PC-9 (cell line): ENCODE measurements at regions of chr1 and their contacts with region 1.

Region 1: GRCh38 chr1:20376880-20377494 is 86.3 kb downstream of the VWA5B1 start:
- DNase-seq: peak in 1 of 2 experiments; percentile 53
- H3K4me3 ChIP-seq: no peak overlapping the region
- H3K27ac ChIP-seq: no peak overlapping the region
- H3K4me1 ChIP-seq: peaks cover 14% of the 10 kb centered on the region
- H3K27me3 ChIP-seq: no peaks in the 10 kb centered on the region
- CTCF ChIP-seq: peak; percentile 76

Region 2: GRCh38 chr1:20411196-20411980 is 34.4 kb after region 1 on chr1:
- CTCF ChIA-PET with region 1: interaction called, 8 read pairs
- POLR2A ChIA-PET with region 1: interaction called, 32 read pairs
- intact Hi-C with region 1: no loop called
- DNase-seq: peak; percentile 33 to 57
- H3K4me3 ChIP-seq: no peak overlapping the region
- H3K27ac ChIP-seq: no peak overlapping the region
- H3K4me1 ChIP-seq: 0 out of 2 replicates have a peak, but pooled peaks cover 4% of the 10 kb centered on the region
- H3K27me3 ChIP-seq: no peaks in the 10 kb centered on the region
- CTCF ChIP-seq: no peak

Region 3: GRCh38 chr1:20485527-20486456 is 108.8 kb after region 1 on chr1 and contains the start of gene CAMK2N1:
- CTCF ChIA-PET with region 1: no interaction called
- POLR2A ChIA-PET with region 1: interaction called, 3 read pairs
- intact Hi-C with region 1: loop called (anchors 5 kb)
- DNase-seq: peak; percentile 47 to 69
- H3K4me3 ChIP-seq: peak within 1 kb of the TSS; percentile 87
- H3K27ac ChIP-seq: peak within 1 kb of the TSS; percentile 87
- H3K4me1 ChIP-seq: peaks cover 33% of the 10 kb centered on the region
- H3K27me3 ChIP-seq: no peaks in the 10 kb centered on the region
- CTCF ChIP-seq: no peak
- total RNA-seq, gene CAMK2N1: 34.9 and 44.6 TPM in 2 replicates

Region 4: GRCh38 chr1:20551193-20551592 is 174.2 kb after region 1 on chr1:
- CTCF ChIA-PET with region 1: no interaction called
- POLR2A ChIA-PET with region 1: no interaction called
- intact Hi-C with region 1: no loop called
- DNase-seq: no peak
- H3K4me3 ChIP-seq: no peak overlapping the region
- H3K27ac ChIP-seq: no peak overlapping the region
- H3K4me1 ChIP-seq: no peaks in the 10 kb centered on the region
- H3K27me3 ChIP-seq: no peaks in the 10 kb centered on the region
- CTCF ChIP-seq: no peak